ENCODE measurements at regions of chr1 and their contacts with region 1.

Region 1: DNA sequence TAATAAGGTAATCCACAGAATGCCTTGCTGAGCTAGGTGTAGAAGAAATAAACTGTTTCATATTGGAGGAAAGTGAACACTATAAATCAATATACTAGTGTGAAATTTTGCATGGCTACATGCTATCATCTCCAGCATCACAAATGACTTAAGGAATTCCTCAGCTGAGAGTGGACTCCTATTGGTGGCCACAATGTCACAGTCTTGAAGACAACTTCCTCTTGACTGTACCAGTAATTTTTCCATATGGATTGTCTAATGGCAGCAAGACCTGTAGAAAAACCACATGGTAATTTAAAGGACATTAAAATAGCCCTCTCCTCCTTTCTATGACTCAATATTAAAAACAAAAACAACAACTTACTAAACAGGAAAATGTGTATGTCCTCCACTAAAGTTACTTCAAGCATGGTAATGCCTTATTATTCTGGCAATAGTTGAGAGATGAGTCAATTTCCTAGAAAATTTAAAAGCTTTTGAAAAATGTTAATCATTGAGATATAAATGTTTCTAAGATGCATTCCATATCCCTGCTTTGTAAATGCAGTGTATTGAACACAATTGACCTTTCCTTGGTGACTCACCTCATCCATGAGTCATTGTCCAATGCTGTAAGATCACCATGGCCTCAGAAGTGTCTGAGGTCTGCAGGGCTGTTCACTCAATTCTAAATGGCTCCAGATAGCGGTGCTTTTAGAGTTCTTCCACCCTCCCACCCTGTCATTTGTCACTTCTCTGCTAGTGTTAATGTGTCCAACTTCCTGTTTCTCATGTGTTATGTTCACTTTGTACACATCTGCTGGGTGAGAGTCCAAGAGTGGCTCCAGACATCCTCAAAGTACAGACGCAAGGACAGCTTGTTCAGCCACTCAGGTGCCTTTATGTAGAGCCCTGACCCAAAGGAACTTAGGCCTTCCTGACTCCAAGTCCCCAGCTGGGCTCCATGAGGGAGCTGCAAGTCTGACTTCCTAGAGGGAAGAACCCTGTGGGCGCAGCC is 32.8 kb upstream of the DNASE2B start:
- DNase-seq: peak; percentile 96
- H3K4me3 ChIP-seq: no peak overlapping the region
- H3K27ac ChIP-seq: peak overlapping the region; percentile 97
- H3K4me1 ChIP-seq: peaks cover 28% of the 10 kb centered on the region
- H3K27me3 ChIP-seq: no peaks in the 10 kb centered on the region
- CTCF ChIP-seq: no peak
- POLR2A ChIP-seq: peak; percentile 51

Region 2: GRCh38 chr1:83725736-83726360 is 639.7 kb before region 1 on chr1:
- CTCF ChIA-PET with region 1: no interaction called
- POLR2A ChIA-PET with region 1: no interaction called
- dilution Hi-C with region 1: no loop called
- intact Hi-C with region 1: no loop called
- DNase-seq: no peak
- H3K4me3 ChIP-seq: no peak overlapping the region
- H3K27ac ChIP-seq: no peak overlapping the region
- H3K4me1 ChIP-seq: no peaks in the 10 kb centered on the region
- H3K27me3 ChIP-seq: no peaks in the 10 kb centered on the region
- CTCF ChIP-seq: no peak
- POLR2A ChIP-seq: no peak

Region 3: GRCh38 chr1:84247425-84248220 is 117.9 kb before region 1 on chr1:
- CTCF ChIA-PET with region 1: no interaction called
- POLR2A ChIA-PET with region 1: no interaction called
- dilution Hi-C with region 1: no loop called
- intact Hi-C with region 1: loop called (anchors 1 kb)
- DNase-seq: no peak
- H3K4me3 ChIP-seq: peak overlapping the region in 1 of 3 experiments; percentile 18
- H3K27ac ChIP-seq: peak overlapping the region; percentile 90
- H3K4me1 ChIP-seq: peaks cover 35% of the 10 kb centered on the region
- H3K27me3 ChIP-seq: no peaks in the 10 kb centered on the region
- CTCF ChIP-seq: no peak
- POLR2A ChIP-seq: no peak

Region 4: GRCh38 chr1:84330125-84330984 is 35.2 kb before region 1 on chr1:
- CTCF ChIA-PET with region 1: no interaction called
- POLR2A ChIA-PET with region 1: no interaction called
- dilution Hi-C with region 1: no loop called
- intact Hi-C with region 1: no loop called
- DNase-seq: no peak
- H3K4me3 ChIP-seq: no peak overlapping the region
- H3K27ac ChIP-seq: no peak overlapping the region
- H3K4me1 ChIP-seq: no peaks in the 10 kb centered on the region
- H3K27me3 ChIP-seq: no peaks in the 10 kb centered on the region
- CTCF ChIP-seq: no peak
- POLR2A ChIP-seq: no peak

Region 5: DNA sequence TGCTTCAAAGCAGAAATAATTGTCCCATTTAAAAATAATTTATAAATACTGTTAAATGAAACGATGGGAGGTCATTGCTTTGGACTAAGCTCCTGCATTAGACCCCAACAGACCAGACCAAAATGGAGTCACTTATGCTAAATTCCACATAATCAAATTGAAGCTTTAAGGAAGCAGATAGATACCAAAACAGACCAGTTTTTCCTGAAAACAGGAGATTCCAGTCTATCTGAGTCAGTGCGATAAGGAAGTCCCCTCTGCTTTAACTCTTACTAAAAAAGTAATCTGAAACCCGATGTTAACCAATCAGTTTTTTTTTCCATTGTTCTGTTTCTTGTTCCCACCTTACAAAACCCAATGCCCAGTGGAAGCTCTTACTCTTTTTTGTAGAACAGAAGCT is 16.6 kb after region 1 on chr1:
- CTCF ChIA-PET with region 1: interaction called, 4 read pairs
- POLR2A ChIA-PET with region 1: no interaction called
- dilution Hi-C with region 1: no loop called
- intact Hi-C with region 1: loop called (anchors 2 kb)
- DNase-seq: no peak
- H3K4me3 ChIP-seq: no peak overlapping the region
- H3K27ac ChIP-seq: no peak overlapping the region
- H3K4me1 ChIP-seq: peaks cover 10% of the 10 kb centered on the region
- H3K27me3 ChIP-seq: no peaks in the 10 kb centered on the region
- CTCF ChIP-seq: no peak
- POLR2A ChIP-seq: no peak

Region 6: DNA sequence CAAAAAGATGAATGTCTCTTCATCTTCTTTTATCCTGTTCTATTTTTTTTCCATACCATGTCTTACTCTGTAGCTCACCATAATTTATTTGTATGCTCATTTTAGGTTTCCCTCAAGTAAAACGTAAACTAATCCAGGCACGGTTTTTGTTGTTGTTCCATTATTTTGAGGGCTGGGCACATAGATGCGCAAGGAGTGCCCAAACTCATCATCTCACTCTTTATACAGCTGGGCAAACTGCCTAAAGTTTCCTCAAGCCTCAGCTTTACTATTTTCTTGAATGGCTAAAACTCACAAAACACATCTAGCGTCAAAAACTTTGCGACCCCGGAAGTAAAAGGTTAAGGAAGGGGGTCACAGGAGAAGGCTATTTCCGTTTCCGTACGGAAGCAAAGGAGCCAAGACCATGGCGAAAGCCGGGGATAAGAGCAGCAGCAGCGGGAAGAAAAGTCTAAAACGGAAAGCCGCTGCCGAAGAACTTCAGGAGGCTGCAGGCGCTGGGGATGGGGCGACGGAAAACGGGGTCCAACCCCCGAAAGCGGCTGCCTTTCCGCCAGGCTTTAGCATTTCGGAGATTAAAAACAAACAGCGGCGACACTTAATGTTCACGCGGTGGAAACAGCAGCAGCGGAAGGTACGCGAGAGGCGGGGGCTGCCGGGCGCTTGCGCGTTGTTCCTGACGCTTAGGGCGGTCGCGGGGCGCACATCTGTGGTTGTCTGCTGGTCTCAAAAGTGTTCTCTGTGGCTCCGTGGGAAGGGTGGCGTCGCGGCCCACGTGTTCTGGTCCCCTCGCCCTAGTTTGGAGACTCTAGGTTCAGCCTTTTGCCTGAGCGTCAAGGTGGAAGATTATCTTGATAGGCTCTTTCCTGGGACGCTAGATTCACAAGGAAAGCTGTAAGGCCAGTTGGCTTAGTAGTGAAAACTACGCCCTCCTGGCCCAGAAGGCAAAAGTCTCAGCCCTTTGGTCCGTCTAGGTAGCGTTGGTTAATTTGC is 113.6 kb after region 1 on chr1 and contains the start of gene RPF1:
- CTCF ChIA-PET with region 1: no interaction called
- POLR2A ChIA-PET with region 1: no interaction called
- dilution Hi-C with region 1: no loop called
- intact Hi-C with region 1: loop called (anchors 1 kb)
- DNase-seq: peak; percentile 85
- H3K4me3 ChIP-seq: peak within 1 kb of the TSS; percentile 59 to 95 (median 64)
- H3K27ac ChIP-seq: peak within 1 kb of the TSS; percentile 66
- H3K4me1 ChIP-seq: peaks cover 17% of the 10 kb centered on the region
- H3K27me3 ChIP-seq: no peaks in the 10 kb centered on the region
- CTCF ChIP-seq: no peak
- POLR2A ChIP-seq: peak; percentile 68
- total RNA-seq, gene RPF1: 32.6 and 34.3 TPM in 2 replicates